Heart left ventricle (tissue), 16 donors: ENCODE measurements at regions of chr13 and their contacts with region 1.

Region 1: DNA sequence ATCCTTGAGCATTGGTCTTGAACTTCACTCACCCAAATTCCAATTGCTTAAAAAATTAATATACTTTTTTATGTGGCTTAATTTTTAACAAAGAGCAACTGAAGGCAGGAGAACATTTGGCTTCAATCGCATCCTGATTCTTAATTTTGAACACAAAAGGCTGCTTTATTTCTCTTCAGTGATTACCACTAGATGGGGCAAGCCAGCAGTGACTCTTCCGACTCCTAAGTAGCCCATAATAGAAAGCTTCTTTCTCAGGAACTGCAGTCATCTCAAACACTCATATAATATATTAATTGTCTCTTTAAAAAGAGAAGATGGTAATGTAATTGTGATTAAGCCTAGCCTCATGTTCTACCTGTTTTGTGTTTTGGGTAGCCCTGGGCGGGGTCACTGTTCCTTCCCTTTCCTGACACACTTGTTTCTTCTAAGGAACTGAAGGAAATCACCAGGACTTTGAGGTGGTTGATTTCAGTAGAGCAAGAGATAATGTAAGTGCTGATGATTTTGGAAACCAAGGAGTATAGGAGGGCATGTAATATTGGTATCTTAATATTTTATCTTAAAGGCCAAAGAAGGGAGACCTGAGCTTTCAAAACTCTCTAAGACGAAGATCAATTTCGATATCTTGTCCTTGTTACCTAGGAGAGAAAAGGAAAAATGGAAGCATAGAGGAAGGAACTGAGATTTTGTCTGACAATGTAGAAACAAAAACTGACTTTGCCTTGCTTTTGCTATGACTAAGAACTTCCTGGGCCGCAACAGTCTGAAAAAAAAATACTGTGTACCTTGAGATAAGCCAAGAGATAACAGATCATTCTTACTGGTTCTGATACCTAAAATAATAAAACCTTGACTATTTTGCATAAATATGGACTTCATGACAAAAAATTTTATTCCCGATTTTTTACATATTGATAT is 73.1 kb downstream of the TNFSF13B start:
- DNase-seq: no peak
- ATAC-seq: peak in 3 of 4 donors; percentile 38 to 53 (median 42)
- H3K4me3 ChIP-seq: no peak overlapping the region
- H3K27ac ChIP-seq: peak overlapping the region in 1 of 12 donors; percentile 22
- H3K4me1 ChIP-seq: peaks cover 0 to 4% (median 0%) of the 10 kb centered on the region in 12 donors
- H3K27me3 ChIP-seq: peaks cover 0 to under 1% (median 0%) of the 10 kb centered on the region in 9 donors
- CTCF ChIP-seq: peak; percentile 27 to 66 (median 52)
- POLR2A ChIP-seq: no peak

Region 2: DNA sequence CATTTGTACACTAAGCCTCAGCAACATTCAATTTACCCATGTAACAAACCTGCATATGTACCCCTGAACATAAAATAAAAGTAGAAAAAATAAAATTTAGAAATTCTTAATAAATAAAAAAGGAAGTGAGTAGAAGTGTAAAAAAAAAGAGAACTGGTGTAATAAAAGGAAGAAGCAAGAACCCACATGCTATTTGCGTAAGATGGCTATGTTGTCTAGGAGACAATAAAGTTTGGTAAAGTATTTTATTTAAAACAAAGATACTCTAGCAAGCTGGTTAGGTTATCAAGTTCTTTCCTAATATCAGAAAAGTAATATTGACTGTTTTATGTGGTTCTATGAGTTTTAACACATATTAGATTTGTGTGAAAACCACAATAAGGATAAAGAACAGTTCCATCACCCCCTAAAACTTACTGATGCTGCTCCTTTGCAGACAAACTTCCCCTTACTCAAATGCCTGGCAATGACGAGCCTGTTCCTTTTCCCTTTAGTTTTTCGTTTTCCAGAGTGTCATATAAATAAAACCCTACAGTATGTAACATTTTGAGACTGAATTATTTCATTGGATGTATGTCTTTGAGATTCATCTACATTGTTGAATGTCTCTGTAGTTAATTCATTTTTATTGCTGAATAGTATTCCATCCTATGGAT is 25.7 kb after region 1 on chr13:
- intact Hi-C with region 1: no loop called
- DNase-seq: no peak
- ATAC-seq: peak in 1 of 4 donors; percentile 42
- H3K4me3 ChIP-seq: no peak overlapping the region
- H3K27ac ChIP-seq: peak overlapping the region in 1 of 12 donors; percentile 84
- H3K4me1 ChIP-seq: peaks cover 0 to 4% (median 0%) of the 10 kb centered on the region in 12 donors
- H3K27me3 ChIP-seq: no peaks in the 10 kb centered on the region
- CTCF ChIP-seq: no peak
- POLR2A ChIP-seq: no peak

Region 3: GRCh38 chr13:108508263-108508662 is 165.6 kb after region 1 on chr13:
- intact Hi-C with region 1: loop called in 2 of 10 experiments (anchors 10 kb)
- DNase-seq: no peak
- ATAC-seq: no peak
- H3K4me3 ChIP-seq: no peak overlapping the region
- H3K27ac ChIP-seq: no peak overlapping the region
- H3K4me1 ChIP-seq: no peaks in the 10 kb centered on the region
- H3K27me3 ChIP-seq: no peaks in the 10 kb centered on the region
- CTCF ChIP-seq: peak in 10 of 12 donors; percentile 13 to 48 (median 26)
- POLR2A ChIP-seq: no peak

Region 4: GRCh38 chr13:108595436-108596274 is 253.0 kb after region 1 on chr13:
- intact Hi-C with region 1: loop called in 1 of 10 experiments (anchors 10 kb)
- DNase-seq: no peak
- ATAC-seq: peak in 1 of 4 donors; percentile 20
- H3K4me3 ChIP-seq: no peak overlapping the region
- H3K27ac ChIP-seq: no peak overlapping the region
- H3K4me1 ChIP-seq: no peaks in the 10 kb centered on the region
- H3K27me3 ChIP-seq: no peaks in the 10 kb centered on the region
- CTCF ChIP-seq: no peak
- POLR2A ChIP-seq: no peak